GM10248 (cell line): ENCODE measurements at regions of chr20 and their contacts with region 1.

Region 1: GRCh38 chr20:50153485-50154377 is at the start of gene PEDS1:
- DNase-seq: peak; percentile 99
- CTCF ChIP-seq: no peak

Region 2: DNA sequence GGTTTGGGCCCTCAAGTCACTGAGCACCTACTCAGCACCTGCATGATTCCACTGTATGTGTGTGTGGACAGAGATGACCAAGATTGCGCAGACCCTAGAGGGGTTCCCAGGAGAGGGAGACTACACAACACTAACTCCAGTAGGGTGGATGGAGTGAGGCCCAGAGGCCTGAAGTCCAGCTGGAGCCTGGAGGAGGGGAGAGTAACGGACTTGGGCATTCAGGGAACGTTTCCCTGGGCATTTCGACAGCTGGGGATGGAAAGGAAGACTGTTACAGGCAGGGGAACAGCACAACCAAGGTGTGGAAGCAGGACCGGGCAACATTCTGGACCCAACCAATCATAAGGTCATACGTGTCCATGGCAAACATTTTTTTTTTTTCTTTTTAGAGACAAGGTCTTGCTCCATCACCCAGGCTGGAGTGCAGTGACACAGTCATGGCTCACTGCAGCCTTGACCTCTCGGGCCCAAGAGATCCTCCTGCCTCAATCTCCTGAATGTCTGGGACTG is 25.8 kb after region 1 on chr20:
- CTCF ChIA-PET with region 1: interaction called, 15 read pairs
- POLR2A ChIA-PET with region 1: no interaction called
- DNase-seq: no peak
- CTCF ChIP-seq: no peak

Region 3: DNA sequence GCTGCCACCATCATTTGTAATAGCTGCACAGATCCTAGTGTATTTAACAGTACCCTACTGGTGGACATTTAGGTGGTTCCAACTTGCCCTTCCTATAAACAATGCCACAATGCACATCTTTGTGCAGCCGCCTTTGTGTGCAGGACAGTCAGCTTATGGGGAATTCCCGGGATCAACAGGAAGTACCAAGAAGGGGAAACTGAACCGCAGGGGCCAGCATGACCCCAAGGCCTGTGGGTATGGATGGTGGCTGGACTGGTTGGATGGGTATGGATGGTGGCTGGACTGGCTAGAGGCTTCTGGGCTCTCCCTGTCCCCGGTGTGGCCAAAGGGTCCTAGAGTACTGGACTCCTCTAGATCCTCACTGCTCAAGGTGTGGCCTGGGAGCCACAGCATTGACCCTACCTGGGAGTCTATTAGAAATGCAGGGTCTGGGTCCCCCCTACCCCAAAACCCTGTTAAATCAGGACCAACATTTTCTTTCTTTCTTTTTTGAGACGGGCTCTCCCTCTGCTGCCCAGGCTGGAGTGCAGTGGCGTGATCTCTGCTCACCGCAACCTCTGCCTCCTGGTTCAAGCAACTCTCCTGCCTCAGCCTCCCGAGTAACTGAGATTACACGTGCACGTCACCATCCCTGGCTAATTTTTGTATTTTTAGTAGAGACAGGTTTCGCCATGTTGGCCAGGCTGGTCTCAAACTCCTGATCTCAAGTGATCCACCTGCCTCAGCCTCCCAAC is 83.8 kb after region 1 on chr20:
- CTCF ChIA-PET with region 1: no interaction called
- POLR2A ChIA-PET with region 1: no interaction called
- DNase-seq: no peak
- CTCF ChIP-seq: no peak